CD4-positive, alpha-beta T cell (primary cell): ENCODE measurements at regions of chr3 and their contacts with region 1.

Region 1: DNA sequence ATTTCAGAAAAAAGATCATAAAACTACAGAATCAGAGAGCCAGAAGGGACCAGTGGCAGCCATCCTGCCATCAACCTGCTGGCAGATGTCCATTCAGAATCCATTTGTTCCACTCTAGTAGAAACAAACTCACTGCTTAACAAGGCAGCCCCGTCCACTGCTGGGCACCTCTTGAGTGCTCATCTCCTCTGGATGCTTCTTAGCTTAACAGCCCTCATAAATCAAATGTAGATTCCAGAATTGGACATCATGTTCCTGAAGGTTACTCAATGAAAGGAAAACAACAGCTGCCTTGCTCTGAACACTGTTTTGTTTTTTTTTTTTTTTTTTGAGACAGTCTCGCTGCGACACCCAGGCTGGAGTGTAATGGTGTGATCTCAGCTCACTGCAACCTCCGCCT is 37.3 kb downstream of the ABCC5 start:
- DNase-seq: no peak
- ATAC-seq: no peak
- H3K4me3 ChIP-seq: no peak overlapping the region
- H3K4me3 Mint-ChIP-seq: no peak overlapping the region
- H3K27ac ChIP-seq: no peak overlapping the region
- H3K27ac Mint-ChIP-seq: no peak overlapping the region
- H3K4me1 ChIP-seq: no peaks in the 10 kb centered on the region
- H3K4me1 Mint-ChIP-seq: no peaks in the 10 kb centered on the region
- H3K27me3 ChIP-seq: no peaks in the 10 kb centered on the region
- H3K27me3 Mint-ChIP-seq: no peaks in the 10 kb centered on the region
- CTCF ChIP-seq: no peak

Region 2: GRCh38 chr3:182818296-182818978 is 1162.0 kb before region 1 on chr3:
- CTCF ChIA-PET with region 1: no interaction called
- POLR2A ChIA-PET with region 1: no interaction called
- intact Hi-C with region 1: no loop called
- DNase-seq: no peak
- ATAC-seq: no peak
- H3K4me3 ChIP-seq: no peak overlapping the region
- H3K4me3 Mint-ChIP-seq: no peak overlapping the region
- H3K27ac ChIP-seq: no peak overlapping the region
- H3K27ac Mint-ChIP-seq: peak overlapping the region; percentile 47
- H3K4me1 ChIP-seq: peaks cover 5% of the 10 kb centered on the region
- H3K4me1 Mint-ChIP-seq: peaks cover 62% of the 10 kb centered on the region
- H3K27me3 ChIP-seq: no peaks in the 10 kb centered on the region
- H3K27me3 Mint-ChIP-seq: no peaks in the 10 kb centered on the region
- CTCF ChIP-seq: no peak

Region 3: DNA sequence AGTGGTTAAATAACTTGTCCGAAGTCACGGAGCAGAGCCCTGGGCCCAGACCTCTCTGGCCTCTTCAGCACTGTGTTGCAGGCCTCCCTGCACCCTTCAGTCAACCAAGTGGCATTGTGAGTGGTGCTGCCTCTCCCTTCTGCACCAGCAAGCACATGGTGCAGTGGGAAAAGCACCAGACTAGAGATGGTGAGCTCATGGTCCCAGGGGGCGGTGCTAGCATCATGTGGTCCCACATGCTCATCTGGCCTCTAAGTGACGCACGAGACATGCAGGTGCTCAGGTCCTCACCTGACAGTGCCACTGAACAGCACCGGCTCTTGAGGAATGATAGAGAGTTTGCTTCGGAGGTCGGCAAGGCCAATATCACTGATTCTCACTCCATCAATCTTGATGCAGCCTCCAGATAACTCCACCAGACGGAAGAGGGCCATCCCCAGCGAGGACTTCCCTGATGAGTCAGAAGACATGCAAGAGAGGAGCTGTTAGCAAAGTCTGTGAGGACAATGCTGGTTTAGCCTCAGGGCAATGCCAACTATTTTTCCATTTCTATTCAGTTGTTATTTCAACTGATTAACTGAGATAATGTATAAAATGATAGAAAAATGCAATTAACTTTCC is 42.7 kb before region 1 on chr3:
- CTCF ChIA-PET with region 1: no interaction called
- POLR2A ChIA-PET with region 1: interaction called, 4 read pairs
- intact Hi-C with region 1: loop called in 1 of 2 experiments (anchors 5 kb)
- DNase-seq: no peak
- ATAC-seq: no peak
- H3K4me3 ChIP-seq: no peak overlapping the region
- H3K4me3 Mint-ChIP-seq: no peak overlapping the region
- H3K27ac ChIP-seq: no peak overlapping the region
- H3K27ac Mint-ChIP-seq: no peak overlapping the region
- H3K4me1 ChIP-seq: no peaks in the 10 kb centered on the region
- H3K4me1 Mint-ChIP-seq: no peaks in the 10 kb centered on the region
- H3K27me3 ChIP-seq: no peaks in the 10 kb centered on the region
- H3K27me3 Mint-ChIP-seq: no peaks in the 10 kb centered on the region
- CTCF ChIP-seq: no peak

Region 4: GRCh38 chr3:184085389-184085852 is 105.0 kb after region 1 on chr3:
- CTCF ChIA-PET with region 1: no interaction called
- POLR2A ChIA-PET with region 1: no interaction called
- intact Hi-C with region 1: no loop called
- DNase-seq: no peak
- ATAC-seq: peak; percentile 60
- H3K4me3 ChIP-seq: no peak overlapping the region
- H3K4me3 Mint-ChIP-seq: no peak overlapping the region
- H3K27ac ChIP-seq: no peak overlapping the region
- H3K27ac Mint-ChIP-seq: no peak overlapping the region
- H3K4me1 ChIP-seq: no peaks in the 10 kb centered on the region
- H3K4me1 Mint-ChIP-seq: peaks cover 7% of the 10 kb centered on the region
- H3K27me3 ChIP-seq: no peaks in the 10 kb centered on the region
- H3K27me3 Mint-ChIP-seq: no peaks in the 10 kb centered on the region
- CTCF ChIP-seq: no peak

Region 5: GRCh38 chr3:185744997-185745843 is 1764.8 kb after region 1 on chr3:
- CTCF ChIA-PET with region 1: no interaction called
- POLR2A ChIA-PET with region 1: no interaction called
- intact Hi-C with region 1: no loop called
- DNase-seq: no peak
- ATAC-seq: no peak
- H3K4me3 ChIP-seq: no peak overlapping the region
- H3K4me3 Mint-ChIP-seq: no peak overlapping the region
- H3K27ac ChIP-seq: no peak overlapping the region
- H3K27ac Mint-ChIP-seq: no peak overlapping the region
- H3K4me1 ChIP-seq: no peaks in the 10 kb centered on the region
- H3K4me1 Mint-ChIP-seq: no peaks in the 10 kb centered on the region
- H3K27me3 ChIP-seq: peaks cover 0 to 6% of the 10 kb centered on the region in 2 experiments
- H3K27me3 Mint-ChIP-seq: peaks cover 22% of the 10 kb centered on the region
- CTCF ChIP-seq: no peak